Prostate gland (tissue), 2 donors: ENCODE measurements at regions of chr4 and their contacts with region 1.

Region 1: DNA sequence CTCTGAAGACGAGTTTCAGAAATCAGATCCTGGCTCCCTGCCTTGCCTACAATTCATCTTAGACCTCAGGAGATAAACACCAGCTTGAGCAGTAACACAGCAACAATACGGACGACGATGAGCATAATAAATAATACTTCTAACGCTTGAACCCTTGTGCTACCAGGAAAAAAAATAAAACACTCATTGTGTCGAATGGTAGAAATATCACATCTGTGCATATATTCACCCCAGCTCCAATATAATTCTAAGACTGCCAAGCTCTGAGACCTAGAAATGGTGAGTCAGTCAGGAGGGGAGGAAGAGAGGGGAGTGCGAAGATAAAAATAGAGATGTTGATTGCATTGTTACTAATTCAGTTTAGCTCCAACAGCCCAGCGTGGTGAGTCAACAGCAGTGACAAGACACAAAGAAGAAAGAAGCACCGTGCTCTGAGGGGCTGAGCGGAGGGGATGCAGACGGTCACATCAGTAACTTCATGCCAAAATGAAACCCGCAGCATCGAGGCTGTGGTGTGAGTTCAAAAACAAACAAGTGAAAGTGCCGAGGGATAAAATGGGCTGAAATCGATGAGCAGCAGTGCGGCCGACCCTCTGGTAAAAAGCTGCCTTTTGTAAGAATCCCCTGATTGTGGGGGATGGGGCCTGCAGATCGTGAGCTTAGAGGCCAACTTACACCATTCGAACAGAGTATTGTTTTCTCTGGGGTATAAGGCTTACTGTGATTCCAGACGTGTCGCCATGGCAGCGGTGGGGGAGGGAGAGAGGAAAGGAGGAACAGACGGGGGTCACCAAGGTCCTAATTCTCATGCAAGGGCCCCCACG is 150.4 kb downstream of the MGST2 start:
- DNase-seq: no peak
- H3K4me3 ChIP-seq: peak overlapping the region; percentile 1 to 2
- H3K27ac ChIP-seq: peak overlapping the region in 1 of 2 donors; percentile 14
- H3K4me1 ChIP-seq: no peaks in the 10 kb centered on the region
- H3K27me3 ChIP-seq: no peaks in the 10 kb centered on the region
- CTCF ChIP-seq: no peak
- POLR2A ChIP-seq: no peak

Region 2: DNA sequence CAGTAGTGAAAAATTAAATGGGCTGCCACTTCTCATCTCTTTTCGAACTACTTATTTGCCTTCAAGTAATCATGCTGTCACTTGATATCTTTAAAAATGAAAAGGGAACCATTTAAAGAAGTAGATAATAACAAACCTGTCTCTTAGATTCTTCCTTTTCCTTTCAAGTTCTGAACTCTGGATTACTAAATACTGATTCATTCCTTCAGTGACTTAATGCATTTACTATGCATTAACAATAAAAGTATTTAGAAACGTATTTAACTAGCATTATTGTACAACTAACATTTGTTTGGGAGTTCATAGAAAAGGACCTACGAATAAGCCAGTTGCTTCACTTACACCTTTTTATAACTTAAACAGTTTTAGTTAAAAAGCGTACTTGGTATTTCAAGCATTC is 423.2 kb before region 1 on chr4:
- intact Hi-C with region 1: no loop called
- DNase-seq: no peak
- H3K4me3 ChIP-seq: no peak overlapping the region
- H3K27ac ChIP-seq: no peak overlapping the region
- H3K4me1 ChIP-seq: no peaks in the 10 kb centered on the region
- H3K27me3 ChIP-seq: no peaks in the 10 kb centered on the region
- CTCF ChIP-seq: no peak
- POLR2A ChIP-seq: no peak

Region 3: DNA sequence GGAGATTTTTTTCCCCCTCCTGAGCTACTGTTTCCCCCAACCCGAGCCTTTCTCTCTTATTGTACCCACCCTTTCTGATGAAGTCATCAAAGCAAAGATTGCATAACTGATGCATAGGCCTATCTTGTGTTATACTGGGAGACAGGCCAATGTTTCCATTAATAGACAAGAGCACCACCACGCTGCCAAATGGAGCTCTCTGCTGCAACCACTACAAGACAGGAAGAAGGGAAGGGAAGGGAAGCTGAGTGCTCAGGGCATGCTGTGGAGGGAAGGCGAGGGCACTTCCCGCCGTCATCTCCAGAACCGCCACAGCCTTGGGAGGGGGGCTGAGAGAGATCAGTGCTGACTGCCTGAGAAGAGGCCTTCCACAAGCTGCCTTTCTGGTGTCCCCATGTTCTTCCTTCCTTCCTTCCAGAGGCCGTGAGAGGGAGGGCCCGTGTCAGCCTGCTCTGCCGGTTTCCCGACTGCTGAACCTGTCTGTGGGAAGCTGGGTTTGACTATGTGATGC is 75.4 kb before region 1 on chr4:
- intact Hi-C with region 1: loop called (anchors 5 kb)
- DNase-seq: peak; percentile 87
- H3K4me3 ChIP-seq: no peak overlapping the region
- H3K27ac ChIP-seq: peak overlapping the region; percentile 80 to 87
- H3K4me1 ChIP-seq: peaks cover 11% of the 10 kb centered on the region
- H3K27me3 ChIP-seq: no peaks in the 10 kb centered on the region
- CTCF ChIP-seq: peak in 3 of 4 experiments; percentile 30 to 62 (median 44)
- POLR2A ChIP-seq: no peak

Region 4: GRCh38 chr4:140004549-140004895 is 188.5 kb after region 1 on chr4:
- intact Hi-C with region 1: no loop called
- DNase-seq: peak; percentile 65
- H3K4me3 ChIP-seq: peak overlapping the region; percentile 21 to 26
- H3K27ac ChIP-seq: peak overlapping the region; percentile 58 to 66
- H3K4me1 ChIP-seq: no peaks in the 10 kb centered on the region
- H3K27me3 ChIP-seq: no peaks in the 10 kb centered on the region
- CTCF ChIP-seq: no peak
- POLR2A ChIP-seq: no peak